SK-N-SH (cell line): ENCODE measurements at regions of chr12 and their contacts with region 1.

Region 1: DNA sequence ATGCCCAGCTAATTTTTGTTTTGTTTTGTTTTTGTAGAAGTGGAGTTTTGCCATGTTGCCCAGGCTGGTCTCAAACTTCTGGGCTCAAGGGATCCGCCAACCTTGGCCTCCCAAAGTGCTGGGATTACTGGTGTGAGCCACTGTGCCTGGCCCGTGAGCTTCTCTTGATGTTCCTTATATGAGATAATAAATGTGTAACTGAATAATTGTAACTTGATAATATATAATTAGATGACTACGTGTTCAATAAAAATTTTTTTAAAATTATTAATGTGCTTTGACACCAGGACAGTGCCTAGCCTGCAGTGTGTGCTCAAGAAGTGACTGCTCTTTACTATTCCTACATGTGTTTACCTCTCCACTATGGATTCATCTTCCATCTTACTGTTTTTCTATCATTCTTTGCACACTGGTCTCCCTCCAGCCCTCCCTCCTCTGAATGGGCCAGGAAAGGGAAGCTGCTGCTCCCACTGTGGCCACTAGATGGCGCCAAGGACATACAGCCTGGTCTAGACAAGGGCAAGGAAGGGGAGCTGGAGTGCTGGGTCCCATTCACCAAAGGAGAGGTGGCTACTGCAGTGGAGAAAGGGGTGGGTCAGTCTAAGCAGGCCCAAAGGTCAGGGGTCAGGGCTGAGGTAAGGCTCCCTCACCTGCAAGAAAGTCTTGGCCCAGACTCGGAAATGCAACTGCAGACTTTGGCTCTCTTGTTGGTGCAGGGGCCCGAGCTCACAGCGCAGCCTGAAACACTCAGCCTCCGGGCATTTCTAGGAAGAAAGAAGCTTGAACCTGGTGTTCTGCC is 14.7 kb upstream of the ZNF385A start:
- DNase-seq: peak; percentile 89
- H3K4me3 ChIP-seq: no peak overlapping the region; a peak in 1 of 4 replicates
- H3K27ac ChIP-seq: no peak overlapping the region
- H3K4me1 ChIP-seq: no peaks in the 10 kb centered on the region
- H3K27me3 ChIP-seq: no peaks in the 10 kb centered on the region
- CTCF ChIP-seq: peak; percentile 99
- EP300 ChIP-seq: no peak
- RAD21 ChIP-seq: peak; percentile 88

Region 2: DNA sequence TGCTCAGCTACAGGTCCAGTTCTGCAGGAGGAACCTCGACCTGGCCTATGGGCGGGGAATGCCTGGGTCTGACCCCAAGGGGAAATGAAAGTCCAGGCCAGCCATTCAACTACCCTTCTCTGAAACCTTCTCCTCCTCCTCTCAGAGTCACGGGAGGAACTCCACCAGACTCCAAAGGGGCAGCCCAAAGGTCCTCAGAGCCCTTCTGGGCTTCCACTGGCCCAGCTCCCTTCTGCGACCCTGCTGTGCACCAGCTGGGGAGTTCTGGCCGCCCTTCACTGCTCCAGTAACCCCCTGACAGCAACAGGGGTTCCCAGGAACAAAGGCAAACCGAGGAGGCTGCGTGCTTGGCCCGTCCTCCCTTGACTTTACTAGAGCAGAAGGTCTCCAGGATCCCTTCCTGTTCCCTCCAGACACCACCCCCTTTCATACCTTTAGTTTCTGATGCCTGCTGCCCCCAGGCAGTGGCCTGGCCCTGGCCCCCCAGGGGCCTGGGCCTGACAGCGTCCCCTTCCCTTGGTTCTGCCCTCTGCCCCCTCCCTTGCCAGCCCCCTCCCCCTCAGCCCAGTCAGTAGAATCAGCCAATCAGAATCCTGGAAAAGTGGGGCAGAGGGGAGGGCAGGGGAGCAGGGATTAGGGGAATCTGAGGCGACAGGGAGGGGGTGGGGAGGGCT is 13.8 kb before region 1 on chr12:
- CTCF ChIA-PET with region 1: interaction called, 53 read pairs
- POLR2A ChIA-PET with region 1: no interaction called
- DNase-seq: peak; percentile 78
- H3K4me3 ChIP-seq: no peak overlapping the region
- H3K27ac ChIP-seq: peak overlapping the region in 1 of 2 experiments; percentile 12; a peak in 1 of 4 replicates
- H3K4me1 ChIP-seq: peaks cover 0 to 36% of the 10 kb centered on the region in 2 experiments; a peak in 1 of 4 replicates
- H3K27me3 ChIP-seq: no peaks in the 10 kb centered on the region
- CTCF ChIP-seq: no peak
- EP300 ChIP-seq: no peak
- RAD21 ChIP-seq: no peak

Region 3: DNA sequence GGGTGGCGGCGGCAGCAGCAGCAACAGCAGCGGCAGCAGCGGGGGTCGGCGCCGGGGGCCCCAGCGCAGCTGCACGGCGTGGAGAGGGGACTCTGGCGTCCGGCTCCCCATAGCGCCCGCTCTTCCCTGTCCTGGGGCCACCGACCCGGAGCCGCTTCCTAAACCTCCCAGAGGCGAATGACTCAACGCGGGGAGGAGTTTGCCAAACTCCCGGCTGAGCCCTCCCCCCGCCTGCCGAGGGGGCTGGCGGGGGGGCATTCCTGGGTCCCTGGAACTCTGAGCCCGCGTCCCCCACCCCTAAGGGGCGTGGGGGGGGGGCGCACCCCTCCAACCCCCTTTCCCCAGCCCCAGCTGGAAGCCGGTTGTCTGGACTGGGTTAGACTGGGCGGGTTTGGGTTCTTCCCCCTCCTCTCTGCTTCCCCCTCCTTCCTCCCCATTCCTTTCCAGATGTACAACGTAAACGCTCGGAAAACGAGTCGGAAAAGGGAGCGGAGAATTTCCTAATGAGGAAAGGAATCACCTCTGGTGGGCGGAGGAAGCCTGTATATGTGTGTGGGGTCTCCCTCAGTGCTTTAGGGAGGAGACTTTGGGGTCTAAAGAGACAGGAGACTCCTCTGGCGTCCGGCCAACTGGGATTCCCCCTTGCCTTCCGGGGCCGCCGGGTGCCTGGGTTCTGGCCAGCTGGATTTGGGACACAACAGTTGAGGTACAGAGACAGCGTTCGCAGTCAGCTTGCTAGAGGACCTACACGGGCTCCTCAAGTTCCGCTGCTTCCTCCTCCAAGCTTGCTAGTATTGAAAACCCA is 20.1 kb after region 1 on chr12 and contains the start of gene ITGA5:
- CTCF ChIA-PET with region 1: interaction called, 127 read pairs
- POLR2A ChIA-PET with region 1: no interaction called
- DNase-seq: peak; percentile 58
- H3K4me3 ChIP-seq: peak within 1 kb of the TSS; percentile 59 to 96
- H3K27ac ChIP-seq: peak within 1 kb of the TSS in 1 of 2 experiments; percentile 60; a peak in 2 of 4 replicates
- H3K4me1 ChIP-seq: peaks cover 0 to 23% of the 10 kb centered on the region in 2 experiments; a peak in 3 of 4 replicates
- H3K27me3 ChIP-seq: no peaks in the 10 kb centered on the region
- CTCF ChIP-seq: no peak
- EP300 ChIP-seq: no peak
- RAD21 ChIP-seq: no peak
- polyA plus RNA-seq, gene ITGA5: 35.0 and 52.5 TPM in 2 replicates

Region 4: DNA sequence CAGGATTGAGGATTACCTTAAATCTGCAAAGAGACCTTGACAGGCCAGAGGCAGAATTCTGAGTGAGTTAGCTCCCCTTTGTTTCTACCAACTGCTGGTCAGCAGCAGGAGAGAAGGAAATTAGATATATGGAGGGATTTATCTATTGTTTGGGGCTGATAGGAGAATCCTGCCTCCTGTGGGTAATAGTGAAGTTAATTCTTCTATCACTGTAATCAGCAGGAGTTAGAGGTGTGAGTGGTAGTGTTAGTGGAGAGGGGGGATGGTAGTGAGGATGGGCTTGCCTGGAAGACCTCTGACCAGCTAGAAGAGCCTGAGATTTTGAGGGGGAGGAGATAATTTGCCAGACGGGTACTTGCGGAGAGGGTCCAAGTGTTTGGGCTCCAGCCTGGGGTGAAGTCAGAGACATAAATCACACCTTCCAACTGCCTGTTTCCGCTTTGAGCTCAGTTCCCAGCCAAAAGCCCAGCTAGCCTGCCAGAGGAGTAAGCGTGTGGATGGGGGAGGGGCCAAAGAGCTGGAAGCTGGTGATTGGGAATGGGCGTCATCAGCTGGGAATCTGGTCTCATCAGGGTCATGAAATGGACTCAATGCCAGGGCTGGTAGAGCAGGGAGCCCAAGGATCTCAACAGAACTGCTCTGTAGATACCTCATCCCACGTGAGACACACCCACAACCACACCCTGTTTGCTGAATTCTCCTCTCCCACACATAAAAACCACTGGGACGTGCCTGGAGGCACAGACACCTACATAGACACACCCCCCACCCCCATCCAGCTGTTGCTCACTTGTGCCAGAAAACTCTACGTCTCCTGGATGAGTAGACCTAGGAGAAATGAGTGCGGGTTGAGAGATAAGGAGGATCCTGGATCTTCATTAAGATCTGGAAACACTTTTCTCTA is 33.0 kb after region 1 on chr12:
- CTCF ChIA-PET with region 1: interaction called, 490 read pairs
- POLR2A ChIA-PET with region 1: no interaction called
- DNase-seq: no peak
- H3K4me3 ChIP-seq: no peak overlapping the region
- H3K27ac ChIP-seq: no peak overlapping the region
- H3K4me1 ChIP-seq: peaks cover 0 to 10% of the 10 kb centered on the region in 2 experiments; a peak in 2 of 4 replicates
- H3K27me3 ChIP-seq: no peaks in the 10 kb centered on the region
- CTCF ChIP-seq: no peak
- EP300 ChIP-seq: no peak
- RAD21 ChIP-seq: no peak

Region 5: DNA sequence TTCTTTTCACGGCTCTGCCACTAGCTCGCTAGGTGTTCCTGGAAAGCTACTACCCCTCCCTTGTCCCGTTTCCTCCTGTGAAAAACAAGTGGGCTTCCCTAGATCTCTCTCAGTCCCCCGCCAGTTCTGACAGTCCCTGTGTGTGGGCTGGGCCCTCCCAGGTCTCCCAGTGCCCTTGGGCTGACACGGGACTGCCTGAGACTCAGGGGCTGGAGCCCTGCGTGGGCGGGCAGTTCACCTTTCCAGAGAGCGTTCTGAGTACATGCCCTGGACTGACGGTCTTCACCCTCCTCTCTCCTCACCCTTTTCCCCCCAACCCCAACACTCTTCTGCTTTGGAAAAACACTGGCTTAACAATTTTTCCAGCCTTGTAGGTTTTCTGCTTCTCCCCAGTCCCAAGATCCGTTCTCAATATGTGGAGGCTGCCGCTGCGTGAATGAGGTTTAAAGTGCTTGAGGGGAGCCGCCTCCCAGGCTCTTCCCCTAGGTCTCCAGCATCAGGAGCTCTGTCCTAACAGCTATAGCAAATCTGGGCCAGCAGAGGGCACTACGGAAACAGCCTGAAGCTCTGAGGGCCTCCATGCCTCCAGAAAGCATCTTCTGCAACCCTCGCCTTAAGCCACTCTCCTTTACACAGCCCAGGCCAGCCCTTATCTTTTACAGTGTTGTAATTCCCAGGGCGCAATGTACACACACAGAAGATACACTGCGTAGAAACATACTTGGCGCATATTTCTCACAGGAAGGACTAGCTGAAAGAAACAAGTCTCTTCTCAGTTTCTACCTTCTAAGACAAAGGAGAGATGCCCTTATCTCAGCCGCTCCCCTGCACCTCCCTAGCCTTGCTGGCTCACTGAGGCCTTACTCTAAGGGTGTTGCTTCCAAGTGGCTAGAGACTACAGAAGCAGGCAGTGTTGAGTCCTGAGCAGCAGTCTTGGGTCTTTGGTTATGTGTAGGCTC is 259.4 kb after region 1 on chr12:
- CTCF ChIA-PET with region 1: no interaction called
- POLR2A ChIA-PET with region 1: no interaction called
- DNase-seq: peak; percentile 38
- H3K4me3 ChIP-seq: no peak overlapping the region
- H3K27ac ChIP-seq: no peak overlapping the region
- H3K4me1 ChIP-seq: 0 out of 4 replicates have a peak, but pooled peaks cover 0 to 3% of the 10 kb centered on the region in 2 experiments
- H3K27me3 ChIP-seq: peaks cover 21% of the 10 kb centered on the region
- CTCF ChIP-seq: peak; percentile 66
- EP300 ChIP-seq: no peak
- RAD21 ChIP-seq: peak; percentile 9; the same call in 1 of the 2 replicates